Dorsolateral prefrontal cortex (tissue), 120 donors: ENCODE measurements at regions of chr2 and their contacts with region 1.

Region 1: GRCh38 chr2:88680266-88680902 is 11.1 kb upstream of the RPIA start:
- DNase-seq: no peak
- H3K4me3 ChIP-seq: no peak overlapping the region
- H3K27ac ChIP-seq: no peak overlapping the region
- H3K27me3 ChIP-seq: no peaks in the 10 kb centered on the region
- CTCF ChIP-seq: no peak

Region 2: DNA sequence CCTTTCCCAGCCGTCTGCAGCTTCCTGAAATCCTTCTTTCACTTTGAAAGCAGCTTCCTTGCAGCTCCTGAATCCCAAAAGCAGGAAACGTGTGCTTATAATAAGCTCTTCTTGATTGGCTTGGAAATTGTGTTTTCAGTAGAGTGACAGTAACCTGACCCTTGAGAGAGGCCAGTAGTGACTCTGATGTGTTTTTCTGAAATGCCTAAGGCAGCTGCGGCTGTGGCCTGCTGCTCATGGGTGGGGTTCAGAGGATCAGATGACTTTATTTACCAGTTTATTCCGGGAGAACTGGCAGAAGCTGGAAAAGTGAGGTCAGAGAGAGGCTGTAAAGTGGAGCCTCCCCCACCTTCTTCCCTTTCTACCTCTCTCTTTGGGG is 20.9 kb before region 1 on chr2:
- intact Hi-C with region 1: loop called in 1 of 2 experiments (anchors 1 kb)
- DNase-seq: no peak
- H3K4me3 ChIP-seq: no peak overlapping the region
- H3K27ac ChIP-seq: peak overlapping the region in 18 of 59 donors; percentile 6 to 60 (median 33)
- H3K27me3 ChIP-seq: no peaks in the 10 kb centered on the region
- CTCF ChIP-seq: no peak